ENCODE measurements at regions of chr6 and their contacts with region 1.

Region 1: GRCh38 chr6:143607974-143608373 is 69.8 kb upstream of the PHACTR2 start:
- DNase-seq: peak; percentile 33 to 69 (median 63)
- H3K4me3 ChIP-seq: peak overlapping the region in 1 of 4 donors; percentile 40
- H3K27ac ChIP-seq: peak overlapping the region in 1 of 5 donors; percentile 45
- H3K4me1 ChIP-seq: peaks cover 6 to 19% of the 10 kb centered on the region in 2 donors
- H3K27me3 ChIP-seq: no peaks in the 10 kb centered on the region
- CTCF ChIP-seq: no peak
- POLR2A ChIP-seq: peak in 1 of 2 donors; percentile 39

Region 2: DNA sequence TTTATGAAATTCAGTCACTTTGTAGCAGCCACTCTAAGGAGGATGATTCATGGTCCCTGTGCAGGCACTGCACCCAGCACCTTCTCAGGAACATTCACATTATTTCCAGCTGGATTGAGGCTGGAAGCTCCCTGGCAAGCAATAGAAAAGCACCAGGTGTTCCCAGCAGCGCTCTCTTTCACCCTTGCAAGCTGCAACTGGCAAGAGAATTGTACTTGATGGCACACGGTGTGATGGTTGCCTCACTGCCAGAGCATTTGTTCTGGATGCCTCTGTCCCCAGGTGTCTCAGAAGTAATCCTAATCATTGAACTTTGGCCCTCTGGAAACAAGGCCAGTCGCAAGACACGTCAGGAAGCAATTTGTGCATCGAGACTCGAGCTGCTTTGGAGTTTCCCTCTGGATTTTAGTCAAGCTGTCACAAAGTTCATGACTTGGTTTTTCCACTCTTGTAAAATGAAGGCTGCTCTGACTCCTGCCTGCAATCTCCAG is 44.9 kb after region 1 on chr6:
- intact Hi-C with region 1: loop called in 1 of 2 experiments (anchors 10 kb)
- DNase-seq: no peak
- H3K4me3 ChIP-seq: no peak overlapping the region
- H3K27ac ChIP-seq: no peak overlapping the region
- H3K4me1 ChIP-seq: no peaks in the 10 kb centered on the region
- H3K27me3 ChIP-seq: no peaks in the 10 kb centered on the region
- CTCF ChIP-seq: no peak
- POLR2A ChIP-seq: no peak

Region 3: GRCh38 chr6:143677891-143678791 is 70.2 kb after region 1 on chr6 and contains the start of gene PHACTR2:
- intact Hi-C with region 1: loop called in 1 of 2 experiments (anchors 10 kb)
- DNase-seq: peak; percentile 79 to 88 (median 85)
- H3K4me3 ChIP-seq: peak within 1 kb of the TSS; percentile 79 to 98 (median 82)
- H3K27ac ChIP-seq: peak within 1 kb of the TSS; percentile 86 to 97 (median 96)
- H3K4me1 ChIP-seq: peaks cover 3 to 37% of the 10 kb centered on the region in 2 donors
- H3K27me3 ChIP-seq: no peaks in the 10 kb centered on the region
- CTCF ChIP-seq: no peak
- POLR2A ChIP-seq: peak in 1 of 2 donors; percentile 80
- total RNA-seq, gene PHACTR2: 118 to 315 (median 241) TPM

Region 4: DNA sequence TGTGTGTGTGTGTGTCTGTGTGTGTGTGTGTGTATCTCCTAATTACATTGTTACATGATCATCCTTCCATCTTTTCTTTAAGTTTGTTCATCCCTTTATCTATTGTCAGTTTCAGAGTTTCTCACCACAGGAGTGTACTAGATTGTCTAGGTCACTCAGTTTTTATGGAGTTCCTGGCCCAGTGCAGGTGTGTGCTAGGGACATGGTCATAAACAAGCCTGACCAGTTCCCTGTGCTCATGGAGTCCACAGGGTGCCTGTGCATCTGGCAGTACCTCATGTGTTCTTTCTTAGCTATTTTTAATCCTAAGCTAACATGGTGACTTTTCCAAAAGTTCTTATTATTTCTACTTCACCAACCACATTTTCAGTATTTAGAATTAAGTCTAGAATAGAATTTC is 113.7 kb after region 1 on chr6:
- intact Hi-C with region 1: no loop called
- DNase-seq: no peak
- H3K4me3 ChIP-seq: no peak overlapping the region
- H3K27ac ChIP-seq: no peak overlapping the region
- H3K4me1 ChIP-seq: no peaks in the 10 kb centered on the region
- H3K27me3 ChIP-seq: no peaks in the 10 kb centered on the region
- CTCF ChIP-seq: no peak
- POLR2A ChIP-seq: no peak

Region 5: GRCh38 chr6:143838395-143838794 is 230.4 kb after region 1 on chr6:
- intact Hi-C with region 1: no loop called
- DNase-seq: no peak
- H3K4me3 ChIP-seq: no peak overlapping the region
- H3K27ac ChIP-seq: no peak overlapping the region
- H3K4me1 ChIP-seq: peaks cover 4 to 5% of the 10 kb centered on the region in 2 donors
- H3K27me3 ChIP-seq: no peaks in the 10 kb centered on the region
- CTCF ChIP-seq: no peak
- POLR2A ChIP-seq: no peak

Measured in adrenal gland (tissue), 19 donors.